Activated CD4-positive, alpha-beta T cell treated with anti-CD3 and anti-CD28 coated beads for 36 hours (primary cell): ENCODE measurements at regions of chr16 and their contacts with region 1.

Region 1: DNA sequence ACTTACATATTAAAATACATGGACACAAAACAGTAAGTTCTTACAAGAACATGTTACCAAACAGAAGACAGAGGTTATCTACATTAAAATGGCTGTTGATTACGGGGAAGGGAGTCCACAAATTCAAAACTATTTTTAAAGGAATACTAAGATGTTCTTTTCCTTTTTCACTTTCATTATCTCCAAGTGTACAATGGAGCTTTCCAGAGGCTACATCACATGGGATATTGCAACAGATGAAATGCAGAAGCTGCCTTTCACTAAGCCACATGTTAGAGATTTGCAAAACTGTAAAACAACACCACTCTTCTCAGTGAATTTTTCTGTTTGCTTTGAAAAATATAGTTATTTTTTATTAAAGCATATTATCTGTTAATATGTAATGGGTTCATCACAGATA is 53.6 kb downstream of the XPO6 start:
- DNase-seq: no peak
- ATAC-seq: no peak
- H3K4me3 Mint-ChIP-seq: no peak overlapping the region
- H3K27ac Mint-ChIP-seq: peak overlapping the region; percentile 38
- H3K4me1 Mint-ChIP-seq: peaks cover 60% of the 10 kb centered on the region
- H3K27me3 Mint-ChIP-seq: no peaks in the 10 kb centered on the region

Region 2: GRCh38 chr16:27972500-27972899 is 185.6 kb before region 1 on chr16:
- CTCF ChIA-PET with region 1: no interaction called
- POLR2A ChIA-PET with region 1: no interaction called
- intact Hi-C with region 1: no loop called
- DNase-seq: peak; percentile 66
- ATAC-seq: peak; percentile 80
- H3K4me3 Mint-ChIP-seq: no peak overlapping the region
- H3K27ac Mint-ChIP-seq: no peak overlapping the region
- H3K4me1 Mint-ChIP-seq: peaks cover 3% of the 10 kb centered on the region
- H3K27me3 Mint-ChIP-seq: peaks cover 12% of the 10 kb centered on the region

Region 3: GRCh38 chr16:28110479-28110878 is 47.7 kb before region 1 on chr16:
- CTCF ChIA-PET with region 1: no interaction called
- POLR2A ChIA-PET with region 1: no interaction called
- intact Hi-C with region 1: loop called in 1 of 2 experiments (anchors 1 kb)
- DNase-seq: no peak
- ATAC-seq: no peak
- H3K4me3 Mint-ChIP-seq: no peak overlapping the region
- H3K27ac Mint-ChIP-seq: peak overlapping the region; percentile 79
- H3K4me1 Mint-ChIP-seq: peaks cover 24% of the 10 kb centered on the region
- H3K27me3 Mint-ChIP-seq: no peaks in the 10 kb centered on the region

Region 4: GRCh38 chr16:28326944-28327610 is 168.9 kb after region 1 on chr16:
- CTCF ChIA-PET with region 1: no interaction called
- POLR2A ChIA-PET with region 1: no interaction called
- intact Hi-C with region 1: no loop called
- DNase-seq: peak; percentile 83
- ATAC-seq: peak; percentile 84
- H3K4me3 Mint-ChIP-seq: no peak overlapping the region
- H3K27ac Mint-ChIP-seq: no peak overlapping the region
- H3K4me1 Mint-ChIP-seq: no peaks in the 10 kb centered on the region
- H3K27me3 Mint-ChIP-seq: no peaks in the 10 kb centered on the region